HEK293 (cell line): ENCODE measurements at regions of chr19 and their contacts with region 1.

Region 1: GRCh38 chr19:19821366-19821951 is at the start of gene ZNF506:
- H3K4me3 ChIP-seq: peak within 1 kb of the TSS; percentile 60
- H3K27ac ChIP-seq: peak within 1 kb of the TSS; percentile 74
- H3K4me1 ChIP-seq: no peaks in the 10 kb centered on the region
- CTCF ChIP-seq: no peak

Region 2: GRCh38 chr19:19105365-19106055 is 715.9 kb before region 1 on chr19:
- CTCF ChIA-PET with region 1: no interaction called
- POLR2A ChIA-PET with region 1: no interaction called
- H3K4me3 ChIP-seq: no peak overlapping the region
- H3K27ac ChIP-seq: no peak overlapping the region
- H3K4me1 ChIP-seq: no peaks in the 10 kb centered on the region
- CTCF ChIP-seq: no peak

Region 3: DNA sequence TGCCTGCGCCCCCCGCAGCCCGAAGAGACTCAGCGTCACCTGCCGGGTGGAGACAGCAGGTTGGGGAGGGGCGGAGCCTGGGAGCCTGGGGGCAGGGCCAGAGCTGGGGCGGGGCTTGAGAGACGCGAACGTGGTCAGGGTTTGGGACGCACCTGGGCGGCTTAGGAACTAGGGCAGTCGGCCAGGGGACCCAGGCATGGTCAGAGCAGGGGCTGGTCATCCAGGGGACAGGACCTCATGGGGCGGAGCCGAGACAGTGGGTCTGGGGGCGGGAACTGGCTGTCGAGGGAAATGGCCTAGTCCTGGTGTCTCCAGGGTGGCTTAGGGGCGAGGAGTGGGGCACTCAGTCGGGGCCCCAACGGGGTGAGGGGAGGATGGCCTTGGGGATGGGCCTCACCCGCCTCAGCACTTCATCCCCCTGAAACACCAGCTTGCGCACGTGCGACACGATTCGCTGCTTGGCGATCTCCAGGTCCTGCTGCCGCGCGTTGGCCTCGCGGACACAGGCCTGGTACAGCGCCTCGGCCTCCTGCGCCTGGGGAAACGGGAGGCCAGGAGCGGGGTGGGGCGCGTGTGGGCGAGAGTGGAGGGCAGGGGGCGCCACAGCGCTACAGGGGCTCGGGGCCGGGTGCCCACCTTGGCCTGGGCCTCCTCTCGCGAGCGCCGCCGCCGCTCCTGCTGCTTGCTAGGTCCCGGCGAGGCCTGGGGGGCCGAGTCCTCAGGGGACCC is 183.8 kb before region 1 on chr19:
- CTCF ChIA-PET with region 1: no interaction called
- POLR2A ChIA-PET with region 1: no interaction called
- H3K4me3 ChIP-seq: no peak overlapping the region
- H3K27ac ChIP-seq: no peak overlapping the region
- H3K4me1 ChIP-seq: no peaks in the 10 kb centered on the region
- CTCF ChIP-seq: no peak

Region 4: GRCh38 chr19:19732579-19733501 is 88.6 kb before region 1 on chr19 and contains the start of gene ZNF14:
- CTCF ChIA-PET with region 1: no interaction called
- POLR2A ChIA-PET with region 1: interaction called, 15 read pairs
- H3K4me3 ChIP-seq: peak within 1 kb of the TSS; percentile 96
- H3K27ac ChIP-seq: peak within 1 kb of the TSS; percentile 27; the same call in 1 of the 2 replicates
- H3K4me1 ChIP-seq: no peaks in the 10 kb centered on the region
- CTCF ChIP-seq: no peak; the same call in 1 of the 2 replicates

Region 5: GRCh38 chr19:19865739-19866481 is 44.5 kb after region 1 on chr19 and contains the start of gene ZNF253:
- CTCF ChIA-PET with region 1: interaction called, 3 read pairs
- POLR2A ChIA-PET with region 1: interaction called, 37 read pairs
- H3K4me3 ChIP-seq: peak within 1 kb of the TSS; percentile 52
- H3K27ac ChIP-seq: peak within 1 kb of the TSS; percentile 14; the same call in 1 of the 2 replicates
- H3K4me1 ChIP-seq: no peaks in the 10 kb centered on the region
- CTCF ChIP-seq: no peak

Region 6: GRCh38 chr19:19900729-19901444 is 79.4 kb after region 1 on chr19 and contains the start of gene ZNF93:
- CTCF ChIA-PET with region 1: no interaction called
- POLR2A ChIA-PET with region 1: interaction called, 32 read pairs
- H3K4me3 ChIP-seq: peak within 1 kb of the TSS; percentile 67
- H3K27ac ChIP-seq: no peak within 1 kb of the TSS
- H3K4me1 ChIP-seq: no peaks in the 10 kb centered on the region
- CTCF ChIP-seq: no peak

Region 7: DNA sequence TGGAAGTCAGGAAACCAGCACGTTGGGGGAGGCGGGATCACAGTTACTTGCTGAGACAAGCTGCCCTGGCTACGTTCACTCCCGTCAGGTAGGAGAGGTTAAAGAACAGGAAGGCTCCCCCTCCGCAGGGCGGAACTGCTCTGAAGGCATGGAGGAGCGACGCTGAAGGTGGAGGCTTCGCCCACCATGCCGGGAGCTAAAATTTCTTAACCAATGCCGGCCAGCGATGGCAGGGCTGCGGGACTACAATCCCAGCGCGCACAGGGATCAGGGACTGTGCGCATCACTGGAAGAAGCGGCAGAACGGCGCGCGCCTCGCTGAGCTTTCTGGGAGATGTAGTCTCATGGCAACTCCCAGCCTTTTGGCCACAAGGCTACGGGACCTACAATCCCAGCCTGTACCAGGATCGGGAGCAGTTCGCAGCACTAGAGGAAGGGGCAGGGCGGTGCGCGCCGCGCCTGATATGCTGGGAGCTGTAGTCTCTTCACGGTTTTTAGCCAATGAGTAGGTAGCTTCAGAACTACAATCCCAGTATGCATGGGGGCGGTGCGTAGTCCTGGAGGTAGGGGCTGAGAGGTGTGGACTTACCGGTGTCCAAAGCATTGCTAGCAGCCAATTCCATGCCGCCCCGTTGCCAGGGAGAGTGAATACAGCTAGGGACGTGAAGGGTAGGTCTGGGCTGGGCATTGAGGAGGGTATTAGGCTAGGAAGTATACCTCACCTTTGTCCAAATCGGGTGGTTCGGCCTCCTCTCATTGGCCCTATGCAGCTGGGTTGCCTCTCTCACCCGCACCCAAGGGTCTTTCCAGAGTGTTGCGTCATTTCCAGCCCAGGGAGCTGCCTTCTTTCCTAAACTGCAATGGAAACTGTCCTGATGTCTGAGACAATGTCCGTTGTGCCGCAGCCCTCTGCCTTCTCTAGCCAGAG is 230.6 kb after region 1 on chr19:
- CTCF ChIA-PET with region 1: no interaction called
- POLR2A ChIA-PET with region 1: interaction called, 10 read pairs
- H3K4me3 ChIP-seq: peak overlapping the region; percentile 67
- H3K27ac ChIP-seq: no peak overlapping the region
- H3K4me1 ChIP-seq: no peaks in the 10 kb centered on the region
- CTCF ChIP-seq: no peak